K562 (cell line): ENCODE measurements at regions of chr7 and their contacts with region 1.

Region 1: GRCh38 chr7:137898839-137899721 is 52.3 kb upstream of the DGKI start:
- DNase-seq: peak; percentile 87 to 91 (median 90)
- ATAC-seq: peak; percentile 99
- H3K4me3 ChIP-seq: no peak overlapping the region
- H3K27ac ChIP-seq: peak overlapping the region; percentile 58
- H3K4me1 ChIP-seq: peaks cover 3 to 13% of the 10 kb centered on the region in 2 experiments; a peak in 3 of 5 replicates
- H3K27me3 ChIP-seq: no peaks in the 10 kb centered on the region
- CTCF ChIP-seq: peak; percentile 96 to 99 (median 97)
- EP300 ChIP-seq: no peak
- POLR2A ChIP-seq: no peak
- RAD21 ChIP-seq: peak; percentile 81 to 95

Region 2: GRCh38 chr7:137434947-137435346 is 464.1 kb before region 1 on chr7:
- CTCF ChIA-PET with region 1: no interaction called
- POLR2A ChIA-PET with region 1: no interaction called
- in situ Hi-C with region 1: no loop called
- intact Hi-C with region 1: no loop called
- DNase-seq: no peak
- ATAC-seq: no peak
- H3K4me3 ChIP-seq: no peak overlapping the region
- H3K27ac ChIP-seq: no peak overlapping the region
- H3K4me1 ChIP-seq: no peaks in the 10 kb centered on the region
- H3K27me3 ChIP-seq: no peaks in the 10 kb centered on the region
- CTCF ChIP-seq: no peak
- EP300 ChIP-seq: no peak
- POLR2A ChIP-seq: no peak
- RAD21 ChIP-seq: no peak

Region 3: GRCh38 chr7:137606061-137606674 is 292.9 kb before region 1 on chr7:
- CTCF ChIA-PET with region 1: interaction called, 11 read pairs
- POLR2A ChIA-PET with region 1: no interaction called
- in situ Hi-C with region 1: no loop called
- intact Hi-C with region 1: loop called (anchors 1 kb)
- DNase-seq: peak in 3 of 4 experiments; percentile 32 to 54 (median 42)
- ATAC-seq: peak; percentile 78
- H3K4me3 ChIP-seq: no peak overlapping the region
- H3K27ac ChIP-seq: no peak overlapping the region
- H3K4me1 ChIP-seq: no peaks in the 10 kb centered on the region
- H3K27me3 ChIP-seq: peaks cover 0 to 2% of the 10 kb centered on the region in 2 experiments; a peak in 1 of 5 replicates
- CTCF ChIP-seq: peak in 2 of 3 experiments; percentile 20 to 67; a peak in 4 of 6 replicates
- EP300 ChIP-seq: no peak
- POLR2A ChIP-seq: no peak
- RAD21 ChIP-seq: peak; percentile 58 to 59

Region 4: GRCh38 chr7:137656227-137656849 is 242.7 kb before region 1 on chr7:
- CTCF ChIA-PET with region 1: interaction called, 24 read pairs
- POLR2A ChIA-PET with region 1: no interaction called
- in situ Hi-C with region 1: loop called (anchors 5 kb)
- intact Hi-C with region 1: loop called (anchors 1 kb)
- DNase-seq: peak; percentile 69 to 84 (median 74)
- ATAC-seq: peak; percentile 96
- H3K4me3 ChIP-seq: no peak overlapping the region
- H3K27ac ChIP-seq: no peak overlapping the region
- H3K4me1 ChIP-seq: no peaks in the 10 kb centered on the region
- H3K27me3 ChIP-seq: peaks cover 6 to 20% of the 10 kb centered on the region in 2 experiments; a peak in 4 of 5 replicates
- CTCF ChIP-seq: peak; percentile 88 to 96 (median 89)
- EP300 ChIP-seq: peak; percentile 10; the same call in 1 of the 2 replicates
- POLR2A ChIP-seq: no peak
- RAD21 ChIP-seq: peak; percentile 91 to 93

Region 5: DNA sequence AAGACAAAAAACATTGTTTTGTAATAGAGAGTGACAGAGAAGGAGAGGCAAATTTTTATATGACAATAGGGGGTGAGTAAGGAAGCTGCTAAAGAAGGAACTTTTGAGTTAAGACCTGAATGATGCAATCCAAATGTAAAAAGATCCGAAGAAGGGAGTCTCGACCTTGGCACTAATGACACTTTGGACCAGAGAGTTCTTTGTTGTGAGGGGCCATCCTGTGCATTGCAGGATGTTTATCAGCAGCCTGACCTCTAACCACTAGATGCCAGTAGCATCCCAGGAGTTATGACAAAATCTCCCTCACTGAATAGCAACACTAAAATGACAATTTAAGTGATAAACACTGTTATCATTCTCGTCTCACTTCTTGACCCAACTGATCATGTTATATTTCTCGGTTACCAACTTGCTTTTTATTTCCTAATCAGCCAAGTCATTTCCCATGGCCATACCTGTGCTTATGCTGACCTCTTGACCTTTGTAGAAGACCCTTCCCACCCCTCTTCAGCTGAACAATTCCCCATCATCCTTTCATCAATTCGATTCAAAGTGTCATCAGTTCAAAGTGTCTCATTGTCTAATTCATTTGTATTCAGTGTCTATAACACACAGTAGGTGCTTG is 82.3 kb before region 1 on chr7:
- CTCF ChIA-PET with region 1: interaction called, 4 read pairs
- POLR2A ChIA-PET with region 1: no interaction called
- in situ Hi-C with region 1: no loop called
- intact Hi-C with region 1: loop called (anchors 1 kb)
- DNase-seq: peak in 1 of 4 experiments; percentile 25
- ATAC-seq: peak; percentile 74
- H3K4me3 ChIP-seq: no peak overlapping the region
- H3K27ac ChIP-seq: no peak overlapping the region
- H3K4me1 ChIP-seq: no peaks in the 10 kb centered on the region
- H3K27me3 ChIP-seq: peaks cover 6 to 21% of the 10 kb centered on the region in 2 experiments
- CTCF ChIP-seq: peak; percentile 38 to 63 (median 47); a peak in 4 of 6 replicates
- EP300 ChIP-seq: no peak
- POLR2A ChIP-seq: no peak
- RAD21 ChIP-seq: peak; percentile 47 to 81

Region 6: DNA sequence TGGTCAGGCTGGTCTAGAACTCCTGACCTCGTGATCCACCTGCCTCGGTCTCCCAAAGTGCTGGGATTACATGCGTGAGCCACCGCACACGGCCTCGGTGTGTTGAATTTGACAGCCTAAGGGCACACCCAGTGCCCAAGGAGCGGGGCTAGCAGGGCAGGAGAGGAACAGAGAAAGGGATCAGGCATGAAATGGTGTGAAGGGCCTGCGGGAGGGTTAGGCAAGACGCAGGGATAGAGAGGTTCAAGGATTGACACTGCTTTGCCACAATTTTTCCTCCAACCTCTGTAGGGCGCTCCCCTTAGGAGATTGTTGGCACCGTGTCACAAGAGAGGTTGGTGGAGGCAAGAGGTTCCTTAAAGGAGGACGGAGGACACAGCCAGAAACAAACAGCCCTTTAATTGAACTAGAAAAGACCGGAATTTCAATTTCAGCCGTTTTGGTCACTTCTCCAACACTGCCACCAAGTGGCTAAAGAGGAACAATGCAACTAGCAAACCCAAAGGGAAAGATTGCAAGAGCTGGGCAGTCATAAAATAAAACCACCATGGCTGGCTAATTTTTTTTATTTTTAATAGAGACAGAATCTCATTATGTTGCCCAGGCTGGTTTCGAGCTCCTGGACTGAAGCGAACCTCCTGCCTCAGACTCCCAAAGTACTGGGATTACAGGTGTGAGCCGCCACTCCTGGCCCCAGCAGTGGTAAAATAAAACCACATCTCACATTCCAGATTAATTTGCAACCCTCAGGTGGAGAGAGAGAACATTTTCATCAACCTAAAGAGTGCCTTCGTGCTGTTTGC is 109.7 kb after region 1 on chr7:
- CTCF ChIA-PET with region 1: interaction called, 63 read pairs
- POLR2A ChIA-PET with region 1: interaction called, 3 read pairs
- in situ Hi-C with region 1: no loop called
- intact Hi-C with region 1: loop called (anchors 1 kb)
- DNase-seq: peak; percentile 55 to 84 (median 66)
- ATAC-seq: peak; percentile 76
- H3K4me3 ChIP-seq: no peak overlapping the region
- H3K27ac ChIP-seq: 0 out of 3 replicates have a peak overlapping the region, but pooled peaks have one; percentile 24
- H3K4me1 ChIP-seq: peaks cover 0 to 3% of the 10 kb centered on the region in 2 experiments; a peak in 2 of 5 replicates
- H3K27me3 ChIP-seq: no peaks in the 10 kb centered on the region
- CTCF ChIP-seq: peak; percentile 88 to 98 (median 91)
- EP300 ChIP-seq: no peak
- POLR2A ChIP-seq: no peak
- RAD21 ChIP-seq: peak; percentile 99 to 100

Region 7: GRCh38 chr7:138032186-138032585 is 133.1 kb after region 1 on chr7:
- CTCF ChIA-PET with region 1: no interaction called
- POLR2A ChIA-PET with region 1: no interaction called
- in situ Hi-C with region 1: no loop called
- intact Hi-C with region 1: no loop called
- DNase-seq: no peak
- ATAC-seq: no peak
- H3K4me3 ChIP-seq: no peak overlapping the region
- H3K27ac ChIP-seq: no peak overlapping the region
- H3K4me1 ChIP-seq: no peaks in the 10 kb centered on the region; a peak in 2 of 5 replicates
- H3K27me3 ChIP-seq: no peaks in the 10 kb centered on the region
- CTCF ChIP-seq: no peak
- EP300 ChIP-seq: no peak
- POLR2A ChIP-seq: no peak
- RAD21 ChIP-seq: no peak

Region 8: GRCh38 chr7:138144958-138145357 is 245.9 kb after region 1 on chr7:
- CTCF ChIA-PET with region 1: no interaction called
- POLR2A ChIA-PET with region 1: no interaction called
- in situ Hi-C with region 1: no loop called
- intact Hi-C with region 1: loop called (anchors 10 kb)
- DNase-seq: no peak
- ATAC-seq: no peak
- H3K4me3 ChIP-seq: no peak overlapping the region
- H3K27ac ChIP-seq: no peak overlapping the region
- H3K4me1 ChIP-seq: peaks cover 2 to 8% of the 10 kb centered on the region in 2 experiments; a peak in 3 of 5 replicates
- H3K27me3 ChIP-seq: peaks cover 0 to 9% of the 10 kb centered on the region in 2 experiments; a peak in 3 of 5 replicates
- CTCF ChIP-seq: no peak
- EP300 ChIP-seq: no peak
- POLR2A ChIP-seq: no peak
- RAD21 ChIP-seq: no peak

Region 9: GRCh38 chr7:138842111-138842510 is 943.0 kb after region 1 on chr7:
- CTCF ChIA-PET with region 1: no interaction called
- POLR2A ChIA-PET with region 1: no interaction called
- in situ Hi-C with region 1: no loop called
- intact Hi-C with region 1: no loop called
- DNase-seq: peak in 3 of 4 experiments; percentile 35 to 62 (median 51)
- ATAC-seq: peak; percentile 84
- H3K4me3 ChIP-seq: no peak overlapping the region
- H3K27ac ChIP-seq: no peak overlapping the region; the same call in 2 of the 3 replicates
- H3K4me1 ChIP-seq: peaks cover 7 to 10% of the 10 kb centered on the region in 2 experiments; a peak in 4 of 5 replicates
- H3K27me3 ChIP-seq: peaks cover 31 to 40% of the 10 kb centered on the region in 2 experiments
- CTCF ChIP-seq: no peak
- EP300 ChIP-seq: peak; percentile 59
- POLR2A ChIP-seq: no peak
- RAD21 ChIP-seq: no peak